Left ventricle myocardium superior (tissue), 1 donor: ENCODE measurements at regions of chr2 and their contacts with region 1.

Region 1: DNA sequence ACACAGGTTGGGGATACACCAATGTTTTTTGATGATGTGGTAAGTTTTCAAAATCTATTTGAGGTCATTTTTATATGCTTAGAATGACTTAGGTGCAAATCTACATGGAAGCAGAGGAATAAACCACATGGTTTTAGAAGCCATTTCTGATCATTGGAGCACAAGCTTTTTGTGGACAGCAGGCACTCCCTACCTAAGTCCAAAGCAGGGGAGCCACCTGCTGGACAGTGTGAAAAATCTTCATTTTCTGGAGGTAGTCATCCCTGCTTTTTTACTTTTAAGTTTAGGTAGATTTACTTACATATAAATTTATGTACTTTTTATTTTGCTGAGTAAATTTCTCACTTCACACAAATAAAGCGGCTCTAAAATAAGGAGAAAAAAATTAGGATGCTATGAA is 323.2 kb downstream of the PLCL1 start:
- DNase-seq: no peak
- ATAC-seq: peak; percentile 80

Region 2: DNA sequence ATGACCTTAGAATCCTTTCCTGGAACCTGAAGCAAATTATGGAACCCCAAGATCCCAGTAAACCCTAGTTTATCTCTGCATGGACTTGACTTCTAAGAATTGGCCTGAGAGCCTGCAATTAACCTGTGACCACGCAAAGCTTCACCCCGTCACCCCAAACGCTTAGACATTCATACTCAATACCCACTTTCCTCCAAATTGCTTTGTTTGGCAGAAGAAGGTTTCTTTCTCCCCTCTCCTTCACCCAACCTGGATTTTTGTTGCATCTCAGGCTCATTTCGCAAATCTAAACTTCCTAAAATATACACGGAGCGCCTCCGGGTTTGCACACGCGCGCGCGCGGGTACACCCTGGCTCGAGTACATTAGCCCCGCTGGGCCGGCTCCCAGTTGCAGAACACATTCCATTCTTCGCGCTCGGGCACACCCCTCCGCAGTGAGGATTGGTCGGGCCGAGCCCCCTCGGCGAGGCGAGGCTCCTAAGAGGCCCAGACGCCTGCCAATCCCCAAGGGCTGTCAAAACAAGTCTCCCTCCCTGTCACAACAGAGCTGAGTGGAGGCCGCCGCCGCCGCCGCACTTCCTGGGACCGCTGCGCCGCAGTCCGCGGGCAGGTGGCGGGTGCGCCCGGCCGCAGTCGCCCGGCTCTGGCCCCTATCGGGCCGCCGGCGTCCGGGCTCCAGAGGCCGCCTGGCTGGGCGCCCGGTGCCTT is 323.4 kb before region 1 on chr2 and contains the start of gene PLCL1:
- intact Hi-C with region 1: loop called (anchors 2 kb)
- DNase-seq: peak; percentile 96
- ATAC-seq: peak; percentile 92
- total RNA-seq, gene PLCL1: 100 TPM

Region 3: GRCh38 chr2:198173242-198173641 is 45.6 kb after region 1 on chr2:
- intact Hi-C with region 1: no loop called
- DNase-seq: no peak
- ATAC-seq: no peak